Posterior vena cava (tissue), 2 donors: ENCODE measurements at regions of chr11 and their contacts with region 1.

Region 1: GRCh38 chr11:12813371-12814225 is 139.4 kb downstream of the TEAD1 start:
- DNase-seq: no peak

Region 2: GRCh38 chr11:12673924-12674570 is 139.6 kb before region 1 on chr11 and contains the start of gene TEAD1:
- intact Hi-C with region 1: loop called in 1 of 2 experiments (anchors 10 kb)
- DNase-seq: peak; percentile 98
- total RNA-seq, gene TEAD1: 56.5 to 59.2 TPM

Region 3: DNA sequence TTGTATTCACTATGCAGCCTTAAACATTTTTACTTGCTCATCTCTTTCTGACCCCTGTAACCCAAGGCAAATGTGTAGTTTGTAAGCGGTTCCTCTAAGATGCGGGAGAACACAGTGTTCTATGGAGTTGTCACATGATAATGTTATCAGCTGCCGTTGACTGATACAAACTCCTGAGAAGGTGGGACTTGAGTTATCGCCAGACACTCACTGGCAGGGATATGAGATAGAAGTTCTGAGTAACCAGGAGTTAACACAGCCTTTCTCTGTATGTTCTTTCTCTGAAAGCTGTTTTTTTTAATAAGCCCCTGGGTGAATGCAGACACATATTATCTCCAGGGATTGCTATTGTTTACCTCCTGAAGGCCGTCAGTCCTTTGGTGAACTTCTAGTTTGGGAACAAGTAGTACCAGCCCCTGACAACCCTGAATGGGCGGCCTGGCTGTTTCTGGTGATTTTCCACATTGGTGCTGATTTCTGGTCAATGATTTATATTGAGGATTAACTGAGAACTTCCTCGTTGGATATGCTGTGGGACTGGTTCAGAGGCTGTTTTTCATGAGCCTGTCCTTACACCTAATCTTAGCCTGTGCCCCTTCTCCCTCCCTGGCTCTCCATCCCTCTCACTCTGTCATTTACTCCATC is 40.2 kb after region 1 on chr11:
- intact Hi-C with region 1: no loop called
- DNase-seq: no peak